Transverse colon (tissue), 4 donors: ENCODE measurements at regions of chr11 and their contacts with region 1.

Region 1: DNA sequence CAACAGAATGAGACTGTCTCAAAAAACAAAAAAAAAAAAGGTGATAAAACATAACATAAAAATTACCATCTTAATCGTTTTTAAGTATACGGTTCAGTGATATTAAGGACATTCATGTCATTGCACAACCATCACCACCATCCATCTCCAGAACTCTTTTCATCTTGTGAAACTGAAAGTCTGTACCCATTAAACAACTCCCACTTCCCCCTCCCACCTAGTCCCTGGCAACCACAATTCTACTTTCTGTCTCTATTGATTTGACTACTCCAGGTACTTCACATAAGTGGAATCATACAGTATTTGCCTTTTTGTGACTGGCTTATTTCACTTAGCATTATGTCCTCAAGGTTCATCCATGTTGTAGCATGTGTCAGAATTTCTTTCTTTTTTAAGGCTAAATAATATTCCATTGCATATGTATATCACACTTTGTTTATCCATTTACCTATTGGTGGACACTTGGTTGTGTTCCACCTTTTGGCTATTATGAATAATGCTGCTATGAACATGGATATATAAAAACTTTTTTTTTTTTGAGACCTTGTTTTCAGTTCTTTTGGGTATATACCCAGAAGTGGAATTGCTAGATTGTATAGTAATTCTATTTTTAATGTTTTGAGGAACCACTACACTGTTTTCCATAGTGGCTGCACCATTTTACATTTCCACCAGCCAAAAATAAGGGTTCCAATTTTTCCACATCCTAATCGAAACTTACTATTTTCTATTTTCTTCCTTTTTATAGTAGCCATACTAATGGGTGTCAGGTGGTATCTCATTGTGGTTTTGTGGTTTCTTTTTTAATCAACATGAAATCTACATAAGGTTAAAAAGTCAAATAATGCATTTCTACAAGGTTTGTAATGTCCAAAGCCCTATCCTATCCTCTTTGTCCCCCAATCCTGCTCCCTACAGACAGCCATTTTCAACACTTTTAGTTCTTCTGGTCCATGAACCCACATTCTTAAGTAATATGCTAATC is 23.4 kb upstream of the PIK3C2A start:
- DNase-seq: no peak
- H3K4me3 ChIP-seq: no peak overlapping the region
- H3K27ac ChIP-seq: no peak overlapping the region
- H3K4me1 ChIP-seq: peaks cover 0 to 7% (median 0%) of the 10 kb centered on the region in 4 donors
- H3K27me3 ChIP-seq: no peaks in the 10 kb centered on the region
- CTCF ChIP-seq: no peak
- EP300 ChIP-seq: no peak
- POLR2A ChIP-seq: no peak

Region 2: DNA sequence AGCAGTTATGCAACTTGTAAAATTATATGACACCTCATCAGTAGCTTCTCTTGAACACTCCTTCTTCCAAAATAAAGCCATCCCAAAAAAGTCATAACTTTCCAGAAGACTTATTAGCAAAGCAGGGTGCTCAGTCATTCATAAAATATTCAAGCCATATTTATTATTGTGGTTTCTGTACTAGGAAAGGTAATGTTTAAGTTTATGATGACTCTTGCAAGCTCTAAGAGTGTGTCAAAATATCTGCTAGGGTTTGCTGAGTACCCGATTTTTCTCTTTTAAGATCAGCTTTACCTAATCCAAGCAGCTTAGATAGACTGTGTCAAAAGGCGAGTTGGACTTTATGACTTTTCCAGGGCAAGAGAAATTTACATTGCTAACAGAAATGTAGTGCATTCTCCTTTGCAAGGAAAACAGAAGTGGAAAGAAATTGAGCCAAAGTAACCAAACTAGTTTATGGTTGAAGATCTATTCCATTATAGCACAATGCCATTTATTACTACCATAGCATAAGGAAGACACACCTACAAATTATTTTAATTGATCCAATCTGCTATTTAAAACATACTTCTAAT is 776.8 kb before region 1 on chr11:
- in situ Hi-C with region 1: no loop called
- intact Hi-C with region 1: no loop called
- DNase-seq: no peak
- H3K4me3 ChIP-seq: no peak overlapping the region
- H3K27ac ChIP-seq: no peak overlapping the region
- H3K4me1 ChIP-seq: no peaks in the 10 kb centered on the region
- H3K27me3 ChIP-seq: no peaks in the 10 kb centered on the region
- CTCF ChIP-seq: no peak
- EP300 ChIP-seq: no peak
- POLR2A ChIP-seq: no peak

Region 3: GRCh38 chr11:17528181-17528691 is 297.1 kb after region 1 on chr11:
- in situ Hi-C with region 1: loop called in 3 of 4 experiments (anchors 10 to 25 kb)
- intact Hi-C with region 1: no loop called
- DNase-seq: peak; percentile 52
- H3K4me3 ChIP-seq: no peak overlapping the region
- H3K27ac ChIP-seq: no peak overlapping the region
- H3K4me1 ChIP-seq: peaks cover 0 to 15% (median 7%) of the 10 kb centered on the region in 4 donors
- H3K27me3 ChIP-seq: no peaks in the 10 kb centered on the region
- CTCF ChIP-seq: peak; percentile 58 to 70 (median 63)
- EP300 ChIP-seq: no peak
- POLR2A ChIP-seq: no peak